ENCODE measurements at regions of chr20 and their contacts with region 1.

Region 1: DNA sequence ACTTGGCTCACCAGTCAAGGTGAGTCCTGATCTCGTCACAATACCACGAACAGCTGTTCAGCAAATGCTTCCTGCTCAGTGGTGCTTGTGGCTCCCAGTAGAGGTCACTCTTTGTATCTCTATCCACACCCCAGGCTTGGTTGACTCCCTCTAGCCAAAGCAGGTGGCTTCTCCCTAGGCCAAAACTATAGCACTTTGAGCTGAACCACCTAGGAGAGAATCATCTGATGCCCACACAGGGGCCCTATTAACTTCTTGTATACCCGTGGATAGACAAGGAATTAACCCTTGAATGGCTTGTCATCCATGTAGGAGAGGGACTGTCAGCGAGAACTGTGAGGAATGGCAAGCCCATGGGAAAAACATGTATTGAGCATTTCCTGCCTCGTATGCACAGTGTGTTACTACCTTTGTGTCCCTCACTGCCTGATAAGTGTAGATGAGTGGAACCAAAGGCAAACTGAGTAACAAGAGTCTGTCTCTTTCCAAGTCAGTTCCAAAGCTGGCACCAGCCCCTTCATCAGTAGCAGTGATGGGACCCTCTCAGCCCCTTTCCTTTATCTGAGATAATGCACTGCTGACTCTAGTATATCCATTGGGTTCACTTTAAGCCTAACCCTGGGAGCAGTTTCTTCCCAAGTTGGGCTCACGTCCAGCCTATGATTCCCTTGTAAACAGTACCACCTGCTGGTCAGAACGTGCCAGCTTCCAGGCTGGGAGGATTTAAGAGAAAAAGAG is 42.5 kb downstream of the EIF2S2 start:
- DNase-seq: peak; percentile 91
- ATAC-seq: peak; percentile 84
- H3K4me3 ChIP-seq: no peak overlapping the region
- H3K27ac ChIP-seq: no peak overlapping the region
- H3K4me1 ChIP-seq: peaks cover 6% of the 10 kb centered on the region
- H3K27me3 ChIP-seq: no peaks in the 10 kb centered on the region
- CTCF ChIP-seq: peak; percentile 91

Region 2: DNA sequence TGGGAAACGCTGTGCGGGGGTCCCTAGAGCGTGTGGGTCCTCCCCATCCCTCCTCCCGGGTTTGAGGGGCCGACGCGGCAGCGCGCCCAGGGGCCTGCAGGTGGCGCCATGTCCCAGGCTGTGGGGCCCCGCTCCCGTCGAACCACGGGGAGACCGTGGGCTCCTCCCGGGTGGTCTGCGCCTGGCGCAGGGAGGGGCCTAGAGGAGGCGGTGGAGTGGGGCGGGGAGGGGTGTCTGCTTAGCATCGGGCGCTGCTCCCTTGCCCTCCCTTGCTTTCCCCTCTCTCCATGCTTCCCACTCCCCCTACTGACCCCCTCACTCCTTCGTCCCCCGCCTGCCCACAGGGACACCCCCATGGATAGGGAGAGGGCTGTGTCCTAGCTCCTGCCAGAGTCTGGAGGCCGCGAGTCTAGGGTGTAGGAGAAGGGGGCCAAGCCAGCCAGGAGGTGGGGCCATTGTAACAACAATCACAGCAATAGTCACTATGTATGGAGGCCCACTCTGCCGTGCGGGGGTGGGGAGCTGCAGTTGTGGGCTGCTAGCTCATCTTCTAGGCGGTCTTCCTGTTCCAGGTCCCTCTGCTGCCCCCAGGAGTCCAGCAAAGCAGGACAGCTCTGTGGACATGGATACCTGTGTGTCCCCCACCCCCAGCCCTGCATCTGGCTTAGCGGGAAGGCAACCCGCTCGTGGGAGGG is 206.7 kb before region 1 on chr20:
- CTCF ChIA-PET with region 1: no interaction called
- POLR2A ChIA-PET with region 1: no interaction called
- intact Hi-C with region 1: loop called (anchors 1 kb)
- DNase-seq: peak; percentile 49
- ATAC-seq: peak; percentile 69
- H3K4me3 ChIP-seq: peak overlapping the region; percentile 35; the same call in 1 of the 2 replicates
- H3K27ac ChIP-seq: no peak overlapping the region
- H3K4me1 ChIP-seq: peaks cover 4% of the 10 kb centered on the region; the same call in 1 of the 2 replicates
- H3K27me3 ChIP-seq: no peaks in the 10 kb centered on the region
- CTCF ChIP-seq: peak; percentile 88

Region 3: GRCh38 chr20:33915726-33916331 is 153.7 kb before region 1 on chr20:
- CTCF ChIA-PET with region 1: interaction called, 3 read pairs
- POLR2A ChIA-PET with region 1: no interaction called
- intact Hi-C with region 1: loop called (anchors 1 kb)
- DNase-seq: peak; percentile 51
- ATAC-seq: peak; percentile 68
- H3K4me3 ChIP-seq: no peak overlapping the region
- H3K27ac ChIP-seq: no peak overlapping the region
- H3K4me1 ChIP-seq: 0 out of 2 replicates have a peak, but pooled peaks cover 4% of the 10 kb centered on the region
- H3K27me3 ChIP-seq: no peaks in the 10 kb centered on the region
- CTCF ChIP-seq: peak; percentile 74

Region 4: DNA sequence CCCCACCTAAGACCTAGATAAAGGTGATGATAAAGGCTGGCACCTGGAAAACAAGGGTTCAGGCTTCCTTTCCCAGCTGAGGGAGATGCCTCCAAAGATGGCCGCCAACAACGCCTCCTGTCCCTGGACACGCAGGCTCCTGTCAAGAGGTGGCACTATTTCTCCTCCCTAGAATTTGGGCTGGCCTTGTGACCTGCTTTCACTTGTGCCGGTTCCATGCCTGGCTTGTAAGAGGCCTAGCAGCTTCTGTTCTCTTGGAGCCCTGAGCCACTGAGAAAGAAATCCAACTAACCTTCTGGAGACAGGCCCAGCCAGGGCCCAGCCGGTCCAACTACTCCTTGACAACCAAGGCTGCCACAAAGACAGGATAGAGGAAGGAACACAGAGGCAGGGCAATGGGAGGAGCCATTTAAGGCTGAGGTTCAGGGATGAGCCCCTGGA is 136.0 kb before region 1 on chr20:
- CTCF ChIA-PET with region 1: no interaction called
- POLR2A ChIA-PET with region 1: no interaction called
- intact Hi-C with region 1: loop called (anchors 1 kb)
- DNase-seq: peak; percentile 56
- ATAC-seq: peak; percentile 56
- H3K4me3 ChIP-seq: no peak overlapping the region
- H3K27ac ChIP-seq: no peak overlapping the region
- H3K4me1 ChIP-seq: no peaks in the 10 kb centered on the region
- H3K27me3 ChIP-seq: no peaks in the 10 kb centered on the region
- CTCF ChIP-seq: peak; percentile 62

Measured in PC-3 (cell line).